WTC11 (cell line): ENCODE measurements at regions of chr10 and their contacts with region 1.

Region 1: DNA sequence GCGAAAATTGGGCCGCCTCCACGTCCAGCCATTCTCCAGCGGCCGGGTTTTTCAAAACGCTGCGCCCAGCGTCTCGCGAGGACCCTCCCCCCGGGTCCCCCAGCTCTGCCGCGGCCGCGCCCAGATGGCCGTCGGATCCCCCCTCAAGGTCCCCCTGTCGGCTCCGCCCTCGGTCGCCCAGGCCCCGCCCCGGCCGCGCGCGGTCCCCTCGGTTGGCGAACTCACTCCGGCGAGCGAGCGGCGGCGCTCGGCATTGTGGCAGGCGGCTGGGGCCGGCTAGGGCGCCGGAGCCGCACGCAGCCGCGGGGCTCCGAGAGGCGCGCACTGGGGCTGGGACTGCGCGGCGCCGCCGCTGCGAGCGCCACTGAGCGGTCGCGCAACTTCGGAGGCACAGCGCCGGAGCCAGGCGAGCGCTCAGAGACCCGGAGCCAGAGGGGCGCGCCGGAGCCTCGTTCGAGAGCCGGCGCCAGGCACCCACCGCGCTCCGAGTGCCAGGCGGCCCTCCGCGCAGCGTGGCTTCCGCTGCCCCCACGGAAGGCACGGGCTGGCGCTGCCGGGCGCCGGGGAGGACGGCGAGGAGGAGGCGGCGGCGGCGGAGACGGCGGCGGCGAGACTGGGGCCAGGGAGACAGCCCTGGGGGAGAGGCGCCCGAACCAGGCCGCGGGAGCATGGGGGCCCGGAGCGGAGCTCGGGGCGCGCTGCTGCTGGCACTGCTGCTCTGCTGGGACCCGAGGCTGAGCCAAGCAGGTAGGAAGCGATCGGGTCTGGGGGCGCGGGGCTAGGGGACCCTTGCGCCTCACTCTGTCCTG is at the start of gene UNC5B:
- DNase-seq: peak; percentile 94
- ATAC-seq: peak; percentile 72
- H3K4me3 Mint-ChIP-seq: peak within 1 kb of the TSS; percentile 87
- H3K27ac Mint-ChIP-seq: 0 out of 2 replicates have a peak within 1 kb of the TSS, but pooled peaks have one; percentile 23
- H3K4me1 Mint-ChIP-seq: peaks cover 51% of the 10 kb centered on the region
- H3K27me3 Mint-ChIP-seq: peaks cover 41% of the 10 kb centered on the region
- CTCF ChIP-seq: 0 out of 2 replicates have a peak, but pooled peaks have one; percentile 10
- total RNA-seq, gene UNC5B: 31.2 to 49.6 TPM (median 31.6 TPM) in 3 replicates

Region 2: GRCh38 chr10:70925377-70926225 is 286.9 kb before region 1 on chr10:
- CTCF ChIA-PET with region 1: interaction called, 13 read pairs
- POLR2A ChIA-PET with region 1: no interaction called
- DNase-seq: peak; percentile 77
- ATAC-seq: peak; percentile 89
- H3K4me3 Mint-ChIP-seq: no peak overlapping the region
- H3K27ac Mint-ChIP-seq: no peak overlapping the region
- H3K4me1 Mint-ChIP-seq: no peaks in the 10 kb centered on the region
- H3K27me3 Mint-ChIP-seq: no peaks in the 10 kb centered on the region; the same call in 1 of the 2 replicates
- CTCF ChIP-seq: peak; percentile 95

Region 3: GRCh38 chr10:71064413-71065118 is 148.0 kb before region 1 on chr10:
- CTCF ChIA-PET with region 1: interaction called, 17 read pairs
- POLR2A ChIA-PET with region 1: no interaction called
- DNase-seq: no peak
- ATAC-seq: peak; percentile 38; the same call in 1 of the 2 replicates
- H3K4me3 Mint-ChIP-seq: no peak overlapping the region
- H3K27ac Mint-ChIP-seq: 0 out of 2 replicates have a peak overlapping the region, but pooled peaks have one; percentile 36
- H3K4me1 Mint-ChIP-seq: peaks cover 21% of the 10 kb centered on the region
- H3K27me3 Mint-ChIP-seq: no peaks in the 10 kb centered on the region
- CTCF ChIP-seq: no peak

Region 4: GRCh38 chr10:71075086-71075758 is 137.3 kb before region 1 on chr10:
- CTCF ChIA-PET with region 1: interaction called, 12 read pairs
- POLR2A ChIA-PET with region 1: no interaction called
- DNase-seq: peak; percentile 8
- ATAC-seq: peak; percentile 14; the same call in 1 of the 2 replicates
- H3K4me3 Mint-ChIP-seq: no peak overlapping the region
- H3K27ac Mint-ChIP-seq: no peak overlapping the region
- H3K4me1 Mint-ChIP-seq: peaks cover 30% of the 10 kb centered on the region
- H3K27me3 Mint-ChIP-seq: peaks cover 4% of the 10 kb centered on the region
- CTCF ChIP-seq: no peak

Region 5: GRCh38 chr10:71255808-71256660 is 43.5 kb after region 1 on chr10:
- CTCF ChIA-PET with region 1: interaction called, 12 read pairs
- POLR2A ChIA-PET with region 1: interaction called, 4 read pairs
- DNase-seq: no peak
- ATAC-seq: no peak
- H3K4me3 Mint-ChIP-seq: no peak overlapping the region
- H3K27ac Mint-ChIP-seq: no peak overlapping the region; the same call in 1 of the 2 replicates
- H3K4me1 Mint-ChIP-seq: peaks cover 58% of the 10 kb centered on the region
- H3K27me3 Mint-ChIP-seq: no peaks in the 10 kb centered on the region
- CTCF ChIP-seq: no peak

Region 6: GRCh38 chr10:71285180-71285545 is 72.6 kb after region 1 on chr10:
- CTCF ChIA-PET with region 1: interaction called, 12 read pairs
- POLR2A ChIA-PET with region 1: no interaction called
- DNase-seq: peak; percentile 77
- ATAC-seq: peak; percentile 89
- H3K4me3 Mint-ChIP-seq: no peak overlapping the region
- H3K27ac Mint-ChIP-seq: no peak overlapping the region
- H3K4me1 Mint-ChIP-seq: peaks cover 7% of the 10 kb centered on the region
- H3K27me3 Mint-ChIP-seq: no peaks in the 10 kb centered on the region
- CTCF ChIP-seq: peak; percentile 75

Region 7: GRCh38 chr10:71302874-71303568 is 90.5 kb after region 1 on chr10:
- CTCF ChIA-PET with region 1: no interaction called
- POLR2A ChIA-PET with region 1: no interaction called
- DNase-seq: no peak
- ATAC-seq: peak; percentile 80
- H3K4me3 Mint-ChIP-seq: no peak overlapping the region
- H3K27ac Mint-ChIP-seq: no peak overlapping the region
- H3K4me1 Mint-ChIP-seq: no peaks in the 10 kb centered on the region
- H3K27me3 Mint-ChIP-seq: no peaks in the 10 kb centered on the region
- CTCF ChIP-seq: no peak